ENCODE measurements at regions of chr5 and their contacts with region 1.

Region 1: GRCh38 chr5:42235837-42236236 is 187.4 kb upstream of the GHR start:
- DNase-seq: no peak
- H3K4me3 ChIP-seq: no peak overlapping the region
- H3K27ac ChIP-seq: no peak overlapping the region
- H3K4me1 ChIP-seq: no peaks in the 10 kb centered on the region
- H3K27me3 ChIP-seq: no peaks in the 10 kb centered on the region
- CTCF ChIP-seq: no peak
- POLR2A ChIP-seq: no peak

Region 2: GRCh38 chr5:43110606-43111442 is 875.0 kb after region 1 on chr5:
- intact Hi-C with region 1: loop called (anchors 5 kb)
- DNase-seq: no peak
- H3K4me3 ChIP-seq: no peak overlapping the region
- H3K27ac ChIP-seq: no peak overlapping the region
- H3K4me1 ChIP-seq: no peaks in the 10 kb centered on the region
- H3K27me3 ChIP-seq: no peaks in the 10 kb centered on the region
- CTCF ChIP-seq: no peak
- POLR2A ChIP-seq: no peak

Region 3: GRCh38 chr5:43602461-43603343 is 1366.9 kb after region 1 on chr5 and contains the start of gene NNT:
- intact Hi-C with region 1: no loop called
- DNase-seq: peak; percentile 25 to 64
- H3K4me3 ChIP-seq: peak within 1 kb of the TSS; percentile 81 to 96 (median 84)
- H3K27ac ChIP-seq: peak within 1 kb of the TSS; percentile 71 to 91
- H3K4me1 ChIP-seq: no peaks in the 10 kb centered on the region
- H3K27me3 ChIP-seq: no peaks in the 10 kb centered on the region
- CTCF ChIP-seq: no peak
- POLR2A ChIP-seq: no peak
- total RNA-seq, gene NNT: 30.2 to 137 (median 39.2) TPM